ENCODE measurements at regions of chr17 and their contacts with region 1.

Region 1: DNA sequence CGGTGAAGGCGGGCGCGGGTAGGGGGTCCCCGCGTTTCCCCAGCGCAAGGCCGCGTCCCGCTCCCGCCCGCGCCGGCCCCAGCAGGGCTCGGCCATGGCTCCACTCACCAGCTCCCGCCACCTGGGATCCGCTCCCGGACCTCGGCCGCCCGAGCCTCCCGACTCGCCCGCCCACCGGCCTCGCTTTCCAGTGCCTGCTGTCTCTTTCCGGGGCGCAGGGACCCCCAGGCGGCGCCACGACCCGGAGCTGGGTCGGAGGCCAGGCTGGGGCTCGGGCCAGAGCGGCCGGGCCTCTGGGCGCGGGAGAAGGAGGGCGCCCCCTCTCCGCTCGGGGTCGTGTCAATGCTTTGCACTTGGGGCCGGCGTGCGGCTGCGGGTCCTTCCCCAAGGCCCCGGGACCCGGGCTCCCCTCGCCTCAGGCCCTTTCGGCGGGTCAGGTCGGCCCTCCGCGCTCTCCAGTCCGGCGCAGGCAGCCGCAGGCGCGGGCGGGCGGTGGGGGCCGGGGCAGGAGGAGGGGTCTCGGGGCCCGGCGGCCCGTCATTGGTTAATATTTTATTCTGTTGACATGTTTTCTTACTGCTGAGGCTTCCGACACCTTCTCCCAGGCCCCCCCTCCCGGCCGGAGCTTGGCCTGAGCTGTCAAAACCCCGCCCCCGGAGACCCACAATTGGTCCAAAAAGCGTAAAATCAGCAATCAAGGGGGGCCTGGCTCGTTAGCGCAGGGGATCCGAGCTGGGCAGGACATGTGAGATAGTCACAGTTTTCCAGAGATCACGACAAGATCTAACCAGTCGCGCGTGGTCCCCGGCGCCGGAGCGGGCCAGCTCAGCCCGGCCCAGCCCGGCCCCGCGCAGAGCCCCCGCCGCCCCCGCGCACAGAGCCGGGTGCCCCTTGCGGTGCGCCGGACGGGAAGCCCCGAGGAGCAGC is at the start of gene TBX2:
- DNase-seq: peak; percentile 96
- ATAC-seq: peak; percentile 56
- H3K4me3 ChIP-seq: peak within 1 kb of the TSS; percentile 98
- H3K27ac ChIP-seq: peak within 1 kb of the TSS; percentile 100
- H3K4me1 ChIP-seq: peaks cover 16% of the 10 kb centered on the region
- H3K27me3 ChIP-seq: no peaks in the 10 kb centered on the region
- CTCF ChIP-seq: no peak
- POLR2A ChIP-seq: peak; percentile 85
- RAD21 ChIP-seq: no peak; the same call in 1 of the 2 replicates
- total RNA-seq, gene TBX2: 20.1 and 23.6 TPM in 2 replicates

Region 2: GRCh38 chr17:60720763-60721531 is 678.4 kb before region 1 on chr17:
- CTCF ChIA-PET with region 1: interaction called, 4 read pairs
- POLR2A ChIA-PET with region 1: no interaction called
- dilution Hi-C with region 1: no loop called
- in situ Hi-C with region 1: no loop called
- intact Hi-C with region 1: loop called (anchors 1 kb)
- DNase-seq: peak; percentile 81
- ATAC-seq: peak; percentile 90
- H3K4me3 ChIP-seq: no peak overlapping the region
- H3K27ac ChIP-seq: no peak overlapping the region
- H3K4me1 ChIP-seq: peaks cover 3% of the 10 kb centered on the region; the same call in 1 of the 2 replicates
- H3K27me3 ChIP-seq: no peaks in the 10 kb centered on the region
- CTCF ChIP-seq: peak; percentile 86
- POLR2A ChIP-seq: peak; percentile 31; the same call in 1 of the 2 replicates
- RAD21 ChIP-seq: peak; percentile 94

Region 3: GRCh38 chr17:60971515-60972369 is 427.7 kb before region 1 on chr17:
- CTCF ChIA-PET with region 1: interaction called, 4 read pairs
- POLR2A ChIA-PET with region 1: no interaction called
- dilution Hi-C with region 1: no loop called
- in situ Hi-C with region 1: no loop called
- intact Hi-C with region 1: loop called (anchors 2 kb)
- DNase-seq: peak; percentile 80
- ATAC-seq: peak; percentile 99
- H3K4me3 ChIP-seq: no peak overlapping the region
- H3K27ac ChIP-seq: no peak overlapping the region
- H3K4me1 ChIP-seq: no peaks in the 10 kb centered on the region
- H3K27me3 ChIP-seq: no peaks in the 10 kb centered on the region
- CTCF ChIP-seq: peak; percentile 86
- POLR2A ChIP-seq: no peak
- RAD21 ChIP-seq: peak; percentile 90

Region 4: GRCh38 chr17:61065263-61065773 is 334.1 kb before region 1 on chr17:
- CTCF ChIA-PET with region 1: no interaction called
- POLR2A ChIA-PET with region 1: no interaction called
- dilution Hi-C with region 1: no loop called
- in situ Hi-C with region 1: no loop called
- intact Hi-C with region 1: loop called (anchors 5 kb)
- DNase-seq: peak; percentile 36
- ATAC-seq: peak; percentile 75
- H3K4me3 ChIP-seq: no peak overlapping the region
- H3K27ac ChIP-seq: no peak overlapping the region
- H3K4me1 ChIP-seq: no peaks in the 10 kb centered on the region; the same call in 1 of the 2 replicates
- H3K27me3 ChIP-seq: no peaks in the 10 kb centered on the region
- CTCF ChIP-seq: no peak
- POLR2A ChIP-seq: no peak
- RAD21 ChIP-seq: no peak

Region 5: DNA sequence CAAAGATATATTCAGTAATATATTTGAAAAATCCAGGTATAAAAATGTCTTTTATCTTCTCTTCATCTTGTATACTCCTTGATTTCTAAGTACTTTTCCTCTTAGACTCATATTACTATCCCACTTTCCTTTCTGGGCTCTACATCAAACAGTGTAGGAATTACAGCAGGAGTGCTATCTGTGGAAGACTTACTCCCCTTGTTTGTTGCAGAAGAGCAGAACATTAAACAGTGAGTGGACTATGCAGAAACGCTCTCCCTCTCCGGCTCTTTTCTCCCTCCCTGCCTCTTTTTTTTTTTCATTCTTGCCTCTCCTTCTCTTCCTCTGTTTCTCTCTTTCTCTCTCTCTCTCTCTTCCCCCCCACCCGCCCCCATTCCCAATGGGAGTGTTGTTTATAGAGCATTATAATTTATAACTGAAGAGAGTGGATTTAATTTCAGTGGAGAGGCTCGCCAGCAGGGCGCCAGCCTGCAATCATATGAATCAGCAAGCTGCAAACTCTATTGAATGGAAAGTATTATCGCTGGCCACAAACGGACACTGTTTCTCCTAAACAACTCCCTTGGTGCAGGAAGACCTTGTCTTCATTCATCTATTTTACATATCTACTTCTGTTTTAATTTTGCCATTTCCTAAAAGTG is 242.0 kb before region 1 on chr17:
- CTCF ChIA-PET with region 1: no interaction called
- POLR2A ChIA-PET with region 1: interaction called, 5 read pairs
- dilution Hi-C with region 1: no loop called
- in situ Hi-C with region 1: no loop called
- intact Hi-C with region 1: loop called (anchors 5 kb)
- DNase-seq: peak; percentile 71
- ATAC-seq: peak; percentile 80
- H3K4me3 ChIP-seq: peak overlapping the region; percentile 24; the same call in 1 of the 2 replicates
- H3K27ac ChIP-seq: peak overlapping the region; percentile 91; the same call in 1 of the 2 replicates
- H3K4me1 ChIP-seq: peaks cover 9% of the 10 kb centered on the region
- H3K27me3 ChIP-seq: no peaks in the 10 kb centered on the region
- CTCF ChIP-seq: 0 out of 2 replicates have a peak, but pooled peaks have one; percentile 12
- POLR2A ChIP-seq: no peak
- RAD21 ChIP-seq: peak; percentile 36

Region 6: DNA sequence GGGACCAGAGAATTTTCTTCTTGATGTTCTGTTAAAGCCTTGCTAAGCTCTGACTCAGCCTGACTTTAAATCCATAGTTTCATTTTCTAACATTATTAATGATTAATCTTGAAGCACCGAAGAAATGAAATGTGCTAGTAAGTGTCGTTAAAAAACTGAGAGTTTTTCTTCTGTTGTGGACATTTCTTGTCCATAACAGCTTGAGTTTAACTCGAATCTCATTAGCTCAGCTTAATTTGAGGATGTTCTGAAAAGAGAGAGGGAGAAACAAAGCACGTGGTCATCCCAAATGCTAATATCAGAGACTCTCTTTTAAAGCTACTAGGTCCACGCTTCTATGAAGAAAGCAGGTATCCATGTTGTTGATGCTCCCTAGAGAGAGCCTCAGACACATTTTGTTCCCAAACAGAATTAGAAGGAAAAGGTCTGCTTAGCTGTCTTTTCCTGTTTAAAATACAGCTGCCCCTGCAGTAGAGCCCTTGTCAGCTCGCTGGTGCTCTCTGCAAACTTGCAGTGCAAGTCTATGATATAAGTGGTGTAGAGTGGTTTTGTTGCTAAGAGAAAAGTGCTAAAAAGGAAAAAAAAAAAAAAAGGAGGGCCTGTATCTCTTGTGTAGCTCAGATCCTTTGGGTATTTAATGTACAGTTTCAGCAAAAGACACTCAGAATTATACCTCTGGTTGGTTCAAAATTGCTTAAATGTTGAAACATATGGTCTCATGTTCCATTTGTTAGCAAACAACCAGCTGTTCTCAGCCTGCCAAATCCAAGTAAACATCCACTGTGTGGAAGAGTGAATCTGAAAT is 190.9 kb before region 1 on chr17:
- CTCF ChIA-PET with region 1: no interaction called
- POLR2A ChIA-PET with region 1: interaction called, 13 read pairs
- dilution Hi-C with region 1: no loop called
- in situ Hi-C with region 1: loop called (anchors 5 kb)
- intact Hi-C with region 1: loop called (anchors 2 kb)
- DNase-seq: peak; percentile 64
- ATAC-seq: peak; percentile 67
- H3K4me3 ChIP-seq: peak overlapping the region; percentile 3; the same call in 1 of the 2 replicates
- H3K27ac ChIP-seq: peak overlapping the region; percentile 65; the same call in 1 of the 2 replicates
- H3K4me1 ChIP-seq: peaks cover 13% of the 10 kb centered on the region
- H3K27me3 ChIP-seq: no peaks in the 10 kb centered on the region
- CTCF ChIP-seq: no peak
- POLR2A ChIP-seq: no peak
- RAD21 ChIP-seq: no peak

Region 7: GRCh38 chr17:61307905-61308886 is 91.2 kb before region 1 on chr17:
- CTCF ChIA-PET with region 1: interaction called, 3 read pairs
- POLR2A ChIA-PET with region 1: interaction called, 7 read pairs
- dilution Hi-C with region 1: no loop called
- in situ Hi-C with region 1: loop called (anchors 5 kb)
- intact Hi-C with region 1: loop called (anchors 2 kb)
- DNase-seq: peak; percentile 99
- ATAC-seq: peak; percentile 87
- H3K4me3 ChIP-seq: no peak overlapping the region
- H3K27ac ChIP-seq: peak overlapping the region; percentile 99
- H3K4me1 ChIP-seq: peaks cover 35% of the 10 kb centered on the region
- H3K27me3 ChIP-seq: no peaks in the 10 kb centered on the region
- CTCF ChIP-seq: peak; percentile 10; the same call in 1 of the 2 replicates
- POLR2A ChIP-seq: no peak
- RAD21 ChIP-seq: peak; percentile 31; the same call in 1 of the 2 replicates

Region 8: GRCh38 chr17:62882878-62883277 is 1483.5 kb after region 1 on chr17:
- CTCF ChIA-PET with region 1: no interaction called
- POLR2A ChIA-PET with region 1: no interaction called
- dilution Hi-C with region 1: no loop called
- in situ Hi-C with region 1: no loop called
- intact Hi-C with region 1: no loop called
- DNase-seq: peak; percentile 54
- ATAC-seq: no peak; the same call in 1 of the 2 replicates
- H3K4me3 ChIP-seq: no peak overlapping the region
- H3K27ac ChIP-seq: no peak overlapping the region
- H3K4me1 ChIP-seq: peaks cover 3% of the 10 kb centered on the region
- H3K27me3 ChIP-seq: no peaks in the 10 kb centered on the region
- CTCF ChIP-seq: no peak
- POLR2A ChIP-seq: no peak
- RAD21 ChIP-seq: no peak

Measured in IMR-90 (cell line).